Activated CD8-positive, alpha-beta T cell treated with anti-CD3 and anti-CD28 coated beads for 36 hours (primary cell): ENCODE measurements at regions of chr4 and their contacts with region 1.

Region 1: GRCh38 chr4:6673660-6674499 is 19.8 kb upstream of the S100P start:
- DNase-seq: peak; percentile 95
- ATAC-seq: peak; percentile 81
- H3K4me3 Mint-ChIP-seq: peak overlapping the region; percentile 90
- H3K27ac Mint-ChIP-seq: peak overlapping the region; percentile 99
- H3K4me1 Mint-ChIP-seq: peaks cover 42% of the 10 kb centered on the region
- H3K27me3 Mint-ChIP-seq: no peaks in the 10 kb centered on the region
- CTCF ChIP-seq: no peak

Region 2: DNA sequence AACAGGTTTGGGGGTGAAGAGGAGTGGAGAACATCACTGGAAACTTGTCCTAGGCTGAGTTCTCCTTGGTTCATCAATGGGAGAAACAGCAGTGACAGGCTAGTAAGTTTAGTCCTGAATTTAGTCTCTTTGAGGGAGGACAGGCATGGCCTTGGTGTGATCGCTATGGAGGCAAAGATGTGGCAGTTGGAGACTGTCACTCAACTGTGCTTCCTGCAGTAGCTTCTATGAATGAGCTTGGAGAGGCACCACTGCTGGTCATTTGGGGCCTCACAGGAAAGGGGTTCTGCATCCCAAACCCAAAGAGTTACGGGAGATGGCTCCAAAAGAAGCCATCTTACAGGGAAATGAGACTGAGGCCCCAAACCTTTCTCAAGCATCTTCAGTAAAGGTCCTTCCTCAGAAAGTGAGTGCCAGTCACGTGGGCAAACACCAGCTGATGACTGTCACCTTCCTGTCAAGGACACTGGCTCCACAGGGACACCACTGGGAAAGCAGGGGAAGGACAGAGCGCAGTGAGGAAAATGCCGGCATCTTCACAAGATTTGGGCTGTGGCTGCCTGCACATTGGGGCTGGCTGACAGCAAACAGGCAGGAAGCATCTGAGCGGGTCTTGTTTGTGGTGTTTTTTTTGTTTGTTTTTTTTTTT is 26.2 kb before region 1 on chr4:
- CTCF ChIA-PET with region 1: interaction called, 5 read pairs
- POLR2A ChIA-PET with region 1: interaction called, 11 read pairs
- intact Hi-C with region 1: no loop called
- DNase-seq: no peak
- ATAC-seq: no peak
- H3K4me3 Mint-ChIP-seq: no peak overlapping the region
- H3K27ac Mint-ChIP-seq: no peak overlapping the region
- H3K4me1 Mint-ChIP-seq: peaks cover 12% of the 10 kb centered on the region
- H3K27me3 Mint-ChIP-seq: no peaks in the 10 kb centered on the region
- CTCF ChIP-seq: no peak

Region 3: DNA sequence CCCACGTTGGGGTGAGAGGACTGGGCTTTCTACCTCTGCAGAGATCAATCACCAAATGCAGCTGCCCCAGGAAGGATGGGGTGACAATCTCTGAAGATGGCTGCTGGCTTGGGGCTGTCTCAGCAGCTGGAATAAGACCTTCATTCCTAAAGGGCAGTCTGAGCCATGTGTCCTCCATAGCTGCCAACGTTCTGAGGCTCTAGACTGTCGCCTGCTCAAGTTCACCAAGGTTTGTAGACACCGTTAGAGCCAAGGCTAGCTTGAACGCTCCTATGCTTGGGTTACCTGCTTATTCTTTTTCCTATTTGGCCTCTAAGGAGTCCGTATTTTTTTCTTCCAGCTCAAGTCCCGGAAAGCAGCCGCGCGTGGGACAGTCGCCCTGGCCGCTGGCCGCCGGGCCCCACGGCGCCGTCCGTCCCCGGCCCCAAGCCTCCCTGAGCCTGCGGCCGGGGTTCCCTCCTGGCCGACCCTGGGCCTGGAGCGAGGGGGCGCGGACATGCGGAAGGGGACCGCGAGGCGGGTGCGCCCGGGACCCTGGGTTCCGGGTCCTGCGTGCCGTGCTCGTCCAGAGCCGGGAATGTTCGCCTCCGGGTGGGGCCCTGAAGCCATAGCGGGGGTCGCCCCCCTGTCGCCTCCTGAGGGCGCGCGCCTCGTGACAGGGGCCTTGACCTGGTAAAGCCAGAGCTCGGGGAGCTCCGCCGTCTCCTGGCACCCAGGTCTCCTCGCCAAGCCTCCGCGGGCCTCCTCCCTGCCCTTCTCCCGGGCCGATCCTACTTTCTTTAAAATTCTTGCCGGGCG is 10.1 kb before region 1 on chr4:
- CTCF ChIA-PET with region 1: interaction called, 10 read pairs
- POLR2A ChIA-PET with region 1: interaction called, 39 read pairs
- intact Hi-C with region 1: no loop called
- DNase-seq: no peak
- ATAC-seq: no peak
- H3K4me3 Mint-ChIP-seq: no peak overlapping the region
- H3K27ac Mint-ChIP-seq: no peak overlapping the region
- H3K4me1 Mint-ChIP-seq: peaks cover 4% of the 10 kb centered on the region
- H3K27me3 Mint-ChIP-seq: peaks cover 20% of the 10 kb centered on the region
- CTCF ChIP-seq: no peak

Region 4: GRCh38 chr4:6695660-6696630 is 22.1 kb after region 1 on chr4:
- CTCF ChIA-PET with region 1: interaction called, 102 read pairs
- POLR2A ChIA-PET with region 1: interaction called, 74 read pairs
- intact Hi-C with region 1: loop called (anchors 2 kb)
- DNase-seq: peak; percentile 61
- ATAC-seq: peak; percentile 66
- H3K4me3 Mint-ChIP-seq: peak overlapping the region; percentile 38
- H3K27ac Mint-ChIP-seq: peak overlapping the region; percentile 92
- H3K4me1 Mint-ChIP-seq: peaks cover 74% of the 10 kb centered on the region
- H3K27me3 Mint-ChIP-seq: no peaks in the 10 kb centered on the region
- CTCF ChIP-seq: no peak

Region 5: GRCh38 chr4:6709230-6710114 is 35.6 kb after region 1 on chr4 and contains the start of gene MRFAP1L1:
- CTCF ChIA-PET with region 1: interaction called, 66 read pairs
- POLR2A ChIA-PET with region 1: interaction called, 75 read pairs
- intact Hi-C with region 1: loop called (anchors 5 kb)
- DNase-seq: peak; percentile 99
- ATAC-seq: peak; percentile 86
- H3K4me3 Mint-ChIP-seq: peak within 1 kb of the TSS; percentile 99
- H3K27ac Mint-ChIP-seq: peak within 1 kb of the TSS; percentile 98
- H3K4me1 Mint-ChIP-seq: peaks cover 52% of the 10 kb centered on the region
- H3K27me3 Mint-ChIP-seq: no peaks in the 10 kb centered on the region
- CTCF ChIP-seq: no peak
- total RNA-seq, gene MRFAP1L1: 36.7 to 39.2 TPM

Region 6: DNA sequence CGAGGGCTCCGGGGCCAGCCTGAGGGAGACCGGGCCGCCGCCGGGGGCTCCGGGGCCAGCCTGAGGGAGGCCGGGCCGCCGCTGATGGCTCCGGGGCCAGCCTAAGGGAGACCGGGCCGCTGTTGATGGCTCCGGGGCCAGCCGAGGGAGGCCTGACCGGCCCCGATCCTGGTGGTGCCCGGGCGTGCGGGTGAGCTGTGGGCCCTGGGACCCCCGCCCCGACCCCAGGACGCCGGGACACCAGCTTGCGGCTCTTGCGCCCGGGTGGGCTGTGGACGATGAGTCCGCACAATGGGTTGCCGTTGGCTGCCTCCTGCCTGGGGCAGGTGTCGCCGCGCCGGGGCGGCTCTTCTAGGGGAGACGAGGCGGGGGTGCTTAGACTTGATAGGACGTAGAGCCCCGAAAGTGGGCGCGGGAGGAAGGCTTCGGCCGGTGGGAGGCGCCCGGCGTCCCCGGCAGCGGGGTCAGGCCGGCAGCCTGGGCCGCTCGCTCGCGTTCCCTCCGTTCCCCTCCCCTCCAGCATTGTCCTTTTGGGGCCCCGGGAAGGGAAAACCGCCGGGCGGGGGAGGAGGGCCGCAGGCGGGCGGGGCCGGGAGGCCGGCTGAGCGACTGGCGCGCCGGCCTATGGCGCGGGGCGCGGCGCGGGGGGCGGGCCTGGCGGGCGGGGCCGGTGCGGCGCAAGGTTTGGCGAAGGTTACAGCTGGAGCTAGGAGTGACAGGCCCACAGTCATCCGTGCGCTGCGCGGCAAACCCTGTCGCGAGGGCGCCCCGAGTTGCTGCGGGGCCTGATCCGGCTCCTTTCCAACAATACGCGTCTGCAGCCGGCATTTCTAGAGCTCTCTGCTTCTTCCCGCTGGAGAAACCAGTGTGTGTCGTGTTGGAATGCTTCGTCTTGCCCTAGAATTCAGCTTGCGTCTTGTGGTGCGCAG is 109.4 kb after region 1 on chr4:
- CTCF ChIA-PET with region 1: interaction called, 4 read pairs
- POLR2A ChIA-PET with region 1: interaction called, 12 read pairs
- intact Hi-C with region 1: no loop called
- DNase-seq: peak; percentile 89
- ATAC-seq: peak; percentile 75
- H3K4me3 Mint-ChIP-seq: peak overlapping the region; percentile 84
- H3K27ac Mint-ChIP-seq: peak overlapping the region; percentile 76
- H3K4me1 Mint-ChIP-seq: peaks cover 68% of the 10 kb centered on the region
- H3K27me3 Mint-ChIP-seq: no peaks in the 10 kb centered on the region
- CTCF ChIP-seq: no peak

Region 7: DNA sequence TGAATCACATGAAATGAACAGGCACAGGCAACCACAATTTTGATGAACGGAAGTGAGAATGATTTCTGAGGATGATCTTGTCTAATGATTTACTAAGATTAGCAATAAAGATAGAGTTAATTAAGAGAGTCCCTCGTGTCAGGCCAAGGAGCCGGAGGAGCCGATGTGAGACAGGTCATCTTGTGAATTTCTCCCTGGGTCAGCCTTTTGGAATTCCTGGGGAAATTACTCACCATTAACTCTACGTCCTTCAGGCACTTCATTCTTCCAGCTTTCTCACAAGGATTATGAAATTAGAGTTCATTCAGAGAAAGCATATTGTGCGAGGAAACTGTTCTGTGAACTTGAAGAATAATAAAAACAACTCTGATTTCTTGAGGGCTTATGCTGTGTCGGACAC is 674.1 kb after region 1 on chr4:
- CTCF ChIA-PET with region 1: no interaction called
- POLR2A ChIA-PET with region 1: no interaction called
- intact Hi-C with region 1: no loop called
- DNase-seq: no peak
- ATAC-seq: no peak
- H3K4me3 Mint-ChIP-seq: no peak overlapping the region
- H3K27ac Mint-ChIP-seq: no peak overlapping the region
- H3K4me1 Mint-ChIP-seq: no peaks in the 10 kb centered on the region
- H3K27me3 Mint-ChIP-seq: peaks cover 2% of the 10 kb centered on the region
- CTCF ChIP-seq: no peak